ENCODE measurements at regions of chr14 and their contacts with region 1.

Region 1: DNA sequence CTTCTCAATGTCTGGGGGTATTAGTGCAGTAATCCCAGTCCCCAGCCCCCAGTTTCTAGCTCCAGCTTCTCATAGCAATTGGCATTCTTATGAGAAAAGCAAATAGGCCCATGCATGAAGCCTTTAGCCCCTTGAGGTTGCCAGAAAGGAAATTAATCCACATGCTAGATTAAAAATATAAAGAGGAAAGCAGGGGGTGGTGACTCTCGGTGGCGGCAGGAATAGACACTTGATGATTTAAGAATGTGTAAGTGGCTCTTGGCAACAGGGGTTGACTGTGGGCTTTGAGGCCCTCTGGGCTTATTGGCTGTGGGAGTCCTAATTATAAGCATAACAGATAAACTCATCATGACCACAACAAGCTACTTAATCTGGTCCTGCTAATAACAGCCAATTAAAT is 1367.3 kb upstream of the FLRT2 start:
- DNase-seq: no peak
- ATAC-seq: no peak
- H3K4me3 ChIP-seq: no peak overlapping the region
- H3K27ac ChIP-seq: no peak overlapping the region
- H3K4me1 ChIP-seq: no peaks in the 10 kb centered on the region
- H3K27me3 ChIP-seq: no peaks in the 10 kb centered on the region

Region 2: DNA sequence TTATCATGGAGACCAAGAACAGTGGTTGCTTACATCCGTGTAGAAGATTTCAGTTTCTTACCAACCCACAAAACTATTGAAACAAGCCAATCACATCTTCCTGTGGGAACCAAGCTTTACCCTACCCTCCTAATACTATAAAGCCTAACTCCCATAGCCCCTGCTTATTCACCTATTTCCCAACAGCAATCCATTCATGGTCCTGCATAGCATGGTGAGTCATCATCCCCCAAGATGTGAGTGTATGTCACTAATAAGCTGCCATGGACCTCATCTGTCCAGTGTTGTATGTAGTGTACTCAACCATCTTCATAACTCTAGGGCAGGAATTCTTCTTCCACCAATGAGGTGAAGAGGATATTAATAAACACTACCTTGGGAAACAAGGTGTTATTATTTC is 253.1 kb before region 1 on chr14:
- intact Hi-C with region 1: no loop called
- DNase-seq: no peak
- ATAC-seq: no peak
- H3K4me3 ChIP-seq: no peak overlapping the region
- H3K27ac ChIP-seq: no peak overlapping the region
- H3K4me1 ChIP-seq: no peaks in the 10 kb centered on the region
- H3K27me3 ChIP-seq: no peaks in the 10 kb centered on the region

Region 3: DNA sequence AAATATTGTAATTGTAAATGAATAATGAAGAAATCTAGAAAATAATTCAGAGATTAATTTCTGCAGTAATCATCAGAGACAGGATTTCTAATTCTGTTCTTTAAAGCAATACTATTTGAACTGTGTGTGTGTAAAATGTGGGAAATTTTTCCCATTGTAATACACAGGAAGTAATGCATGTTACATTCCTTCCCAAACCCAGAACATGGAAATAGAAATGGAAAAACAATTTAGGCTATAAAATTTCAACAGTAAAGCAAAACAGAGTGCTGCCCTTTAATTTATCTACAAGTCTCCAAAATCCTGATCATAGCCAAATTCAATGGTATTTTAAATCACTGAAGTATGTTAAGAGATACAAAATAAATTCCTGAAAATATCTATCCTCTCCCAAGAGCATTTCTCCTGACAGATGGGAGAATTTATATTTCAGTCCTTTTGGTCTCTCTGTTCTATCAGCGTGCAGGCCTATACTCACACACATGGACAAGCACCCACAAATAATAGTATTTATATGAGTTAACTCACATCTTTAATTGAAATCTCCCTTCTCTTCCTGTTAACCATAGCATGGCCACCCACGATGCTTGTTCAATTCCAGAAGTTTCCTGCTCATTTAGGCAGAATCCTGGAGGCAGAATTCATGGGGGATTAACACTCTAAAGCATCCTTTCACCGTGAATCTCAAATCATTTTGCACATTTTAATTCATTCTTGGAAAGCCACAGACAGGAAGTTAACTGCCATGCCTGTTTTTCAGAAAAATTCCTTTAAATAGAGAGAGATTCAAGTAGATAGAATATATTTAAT is 98.1 kb before region 1 on chr14:
- intact Hi-C with region 1: no loop called
- DNase-seq: no peak
- ATAC-seq: no peak
- H3K4me3 ChIP-seq: no peak overlapping the region
- H3K27ac ChIP-seq: no peak overlapping the region
- H3K4me1 ChIP-seq: no peaks in the 10 kb centered on the region
- H3K27me3 ChIP-seq: no peaks in the 10 kb centered on the region

Region 4: DNA sequence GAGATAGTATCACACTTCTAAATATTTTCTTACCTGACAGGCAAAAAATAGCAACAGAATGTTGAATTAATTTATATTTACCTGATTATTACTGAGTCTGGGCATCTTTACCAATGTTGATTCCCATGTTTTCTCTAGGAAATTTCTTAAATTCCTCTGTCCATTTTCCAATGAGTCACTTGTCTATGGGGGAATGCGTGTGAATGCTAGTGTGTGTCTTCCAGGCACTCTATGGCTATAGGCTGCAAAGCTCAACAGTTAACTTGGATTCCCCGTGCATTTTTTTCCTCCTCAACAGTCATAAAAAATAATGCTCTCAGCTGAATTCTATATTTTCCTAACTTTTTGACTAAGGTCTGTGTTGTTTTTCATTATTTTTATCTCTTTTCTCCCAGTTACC is 18.5 kb before region 1 on chr14:
- intact Hi-C with region 1: loop called in 1 of 2 experiments (anchors 2 kb)
- DNase-seq: no peak
- ATAC-seq: no peak
- H3K4me3 ChIP-seq: no peak overlapping the region
- H3K27ac ChIP-seq: no peak overlapping the region
- H3K4me1 ChIP-seq: no peaks in the 10 kb centered on the region
- H3K27me3 ChIP-seq: no peaks in the 10 kb centered on the region